A673 (cell line): ENCODE measurements at regions of chr13 and their contacts with region 1.

Region 1: GRCh38 chr13:46126552-46127357 is 21.9 kb upstream of the CPB2 start:
- DNase-seq: peak; percentile 96
- H3K4me3 ChIP-seq: no peak overlapping the region
- H3K27ac ChIP-seq: peak overlapping the region; percentile 99
- H3K4me1 ChIP-seq: peaks cover 58% of the 10 kb centered on the region
- H3K27me3 ChIP-seq: no peaks in the 10 kb centered on the region
- CTCF ChIP-seq: peak; percentile 95

Region 2: DNA sequence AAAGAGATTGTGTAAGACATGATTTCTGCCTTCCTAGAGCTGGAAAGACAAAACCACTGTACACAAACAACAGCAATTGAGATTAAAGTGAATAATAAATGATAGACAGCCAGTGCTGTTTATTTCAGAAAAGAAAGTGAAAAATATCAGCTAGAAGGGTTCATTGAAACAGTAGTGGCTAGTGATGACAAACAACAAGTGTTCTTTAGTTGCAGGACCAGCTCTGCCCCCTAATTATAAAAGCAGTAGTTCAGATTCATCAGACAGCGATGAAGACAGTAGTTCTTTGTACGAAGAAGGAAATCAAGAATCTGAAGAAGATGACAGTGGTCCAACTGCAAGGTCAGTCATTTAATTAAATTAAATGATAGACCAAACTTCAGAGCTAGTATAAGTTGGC is 1122.7 kb before region 1 on chr13:
- CTCF ChIA-PET with region 1: no interaction called
- POLR2A ChIA-PET with region 1: no interaction called
- intact Hi-C with region 1: no loop called
- DNase-seq: no peak
- H3K4me3 ChIP-seq: no peak overlapping the region
- H3K27ac ChIP-seq: no peak overlapping the region
- H3K4me1 ChIP-seq: no peaks in the 10 kb centered on the region
- H3K27me3 ChIP-seq: no peaks in the 10 kb centered on the region
- CTCF ChIP-seq: no peak

Region 3: GRCh38 chr13:45340926-45341750 is 785.6 kb before region 1 on chr13 and contains the start of gene TPT1:
- CTCF ChIA-PET with region 1: no interaction called
- POLR2A ChIA-PET with region 1: no interaction called
- intact Hi-C with region 1: no loop called
- DNase-seq: peak; percentile 99
- H3K4me3 ChIP-seq: peak within 1 kb of the TSS; percentile 99
- H3K27ac ChIP-seq: peak within 1 kb of the TSS; percentile 100
- H3K4me1 ChIP-seq: peaks cover 35% of the 10 kb centered on the region
- H3K27me3 ChIP-seq: no peaks in the 10 kb centered on the region
- CTCF ChIP-seq: no peak
- total RNA-seq, gene TPT1: 1,957 and 1,963 TPM in 2 replicates

Region 4: DNA sequence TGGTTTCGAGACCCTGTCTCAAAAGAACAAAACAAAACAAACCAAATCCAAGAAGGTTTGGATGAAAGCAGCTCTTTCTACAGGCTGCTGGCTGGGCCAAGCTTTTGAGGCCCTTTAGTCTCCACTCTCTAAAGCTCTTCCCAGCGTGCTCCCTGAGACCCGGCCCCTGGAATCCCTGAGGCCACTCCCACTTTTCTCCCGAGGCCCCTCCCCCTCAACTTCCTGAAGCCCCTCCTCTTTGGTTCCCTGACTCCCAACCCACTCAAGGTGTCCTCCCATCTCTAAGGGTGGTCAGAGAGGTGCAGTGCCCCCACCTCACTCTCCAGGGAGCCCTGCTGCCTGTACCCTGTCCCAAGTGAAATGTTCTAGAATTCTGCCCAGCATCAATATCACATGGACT is 521.9 kb before region 1 on chr13:
- CTCF ChIA-PET with region 1: no interaction called
- POLR2A ChIA-PET with region 1: no interaction called
- intact Hi-C with region 1: loop called (anchors 5 kb)
- DNase-seq: no peak
- H3K4me3 ChIP-seq: no peak overlapping the region
- H3K27ac ChIP-seq: no peak overlapping the region
- H3K4me1 ChIP-seq: peaks cover 25% of the 10 kb centered on the region
- H3K27me3 ChIP-seq: no peaks in the 10 kb centered on the region
- CTCF ChIP-seq: no peak

Region 5: DNA sequence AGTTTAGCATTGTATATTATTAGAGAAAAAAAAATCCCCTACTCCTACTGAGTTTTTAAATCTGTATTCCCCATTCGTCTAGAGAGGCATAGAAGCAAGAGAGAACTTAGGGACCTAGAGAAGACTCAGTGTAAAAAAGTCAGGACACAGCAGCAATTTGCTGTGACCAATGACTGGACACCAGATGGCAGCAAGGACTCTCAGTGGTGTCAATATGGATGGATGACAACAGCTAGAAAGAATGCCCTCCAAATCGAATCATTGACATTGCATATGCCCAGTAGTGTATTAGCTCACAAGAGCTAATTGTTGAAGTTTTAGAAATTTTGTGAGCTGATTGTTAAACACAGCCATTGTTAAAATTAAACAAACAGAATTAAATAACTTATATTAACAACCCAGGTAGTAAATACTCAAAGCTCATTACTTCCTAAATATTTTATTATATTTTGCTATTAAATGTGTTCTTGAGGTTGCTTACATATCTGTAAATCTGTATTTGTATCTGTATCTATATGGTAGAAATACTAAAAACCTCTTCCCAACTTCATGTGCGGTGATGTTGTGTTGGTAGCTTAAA is 319.1 kb before region 1 on chr13:
- CTCF ChIA-PET with region 1: interaction called, 4 read pairs
- POLR2A ChIA-PET with region 1: no interaction called
- intact Hi-C with region 1: loop called (anchors 10 kb)
- DNase-seq: peak; percentile 73
- H3K4me3 ChIP-seq: no peak overlapping the region
- H3K27ac ChIP-seq: no peak overlapping the region
- H3K4me1 ChIP-seq: peaks cover 30% of the 10 kb centered on the region
- H3K27me3 ChIP-seq: no peaks in the 10 kb centered on the region
- CTCF ChIP-seq: peak; percentile 57

Region 6: GRCh38 chr13:46052319-46053161 is 74.2 kb before region 1 on chr13 and contains the start of gene ZC3H13:
- CTCF ChIA-PET with region 1: interaction called, 3 read pairs
- POLR2A ChIA-PET with region 1: interaction called, 7 read pairs
- intact Hi-C with region 1: loop called (anchors 2 kb)
- DNase-seq: peak; percentile 99
- H3K4me3 ChIP-seq: peak within 1 kb of the TSS; percentile 89
- H3K27ac ChIP-seq: peak within 1 kb of the TSS; percentile 98
- H3K4me1 ChIP-seq: peaks cover 22% of the 10 kb centered on the region
- H3K27me3 ChIP-seq: no peaks in the 10 kb centered on the region
- CTCF ChIP-seq: peak; percentile 42; the same call in 1 of the 2 replicates
- total RNA-seq, gene ZC3H13: 373 and 378 TPM in 2 replicates

Region 7: GRCh38 chr13:46321494-46322225 is 194.9 kb after region 1 on chr13:
- CTCF ChIA-PET with region 1: interaction called, 9 read pairs
- POLR2A ChIA-PET with region 1: no interaction called
- intact Hi-C with region 1: loop called (anchors 2 kb)
- DNase-seq: peak; percentile 89
- H3K4me3 ChIP-seq: no peak overlapping the region
- H3K27ac ChIP-seq: peak overlapping the region; percentile 60
- H3K4me1 ChIP-seq: peaks cover 12% of the 10 kb centered on the region
- H3K27me3 ChIP-seq: no peaks in the 10 kb centered on the region
- CTCF ChIP-seq: peak; percentile 93

Region 8: DNA sequence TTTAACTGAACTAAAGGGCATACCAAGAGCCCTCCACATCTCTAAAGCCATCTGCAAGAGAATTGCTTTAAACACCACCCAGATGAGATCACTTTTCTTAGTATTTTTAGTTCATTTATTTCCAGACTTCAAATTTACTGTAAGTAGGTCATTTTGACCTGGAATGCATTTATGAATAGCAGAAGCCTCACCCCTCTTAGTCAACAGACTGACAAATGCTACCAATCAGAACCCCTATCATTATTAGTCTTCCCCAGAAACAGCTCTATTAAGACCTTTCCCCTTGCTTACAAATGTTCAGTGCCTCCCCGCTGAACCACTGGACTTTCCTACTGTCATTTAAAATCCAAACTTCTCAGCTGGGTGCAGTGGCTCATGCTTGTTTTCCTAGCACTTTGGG is 233.0 kb after region 1 on chr13:
- CTCF ChIA-PET with region 1: no interaction called
- POLR2A ChIA-PET with region 1: no interaction called
- intact Hi-C with region 1: no loop called
- DNase-seq: no peak
- H3K4me3 ChIP-seq: no peak overlapping the region
- H3K27ac ChIP-seq: peak overlapping the region; percentile 22
- H3K4me1 ChIP-seq: no peaks in the 10 kb centered on the region
- H3K27me3 ChIP-seq: no peaks in the 10 kb centered on the region
- CTCF ChIP-seq: no peak